Natural killer cell (primary cell): ENCODE measurements at regions of chr16 and their contacts with region 1.

Region 1: DNA sequence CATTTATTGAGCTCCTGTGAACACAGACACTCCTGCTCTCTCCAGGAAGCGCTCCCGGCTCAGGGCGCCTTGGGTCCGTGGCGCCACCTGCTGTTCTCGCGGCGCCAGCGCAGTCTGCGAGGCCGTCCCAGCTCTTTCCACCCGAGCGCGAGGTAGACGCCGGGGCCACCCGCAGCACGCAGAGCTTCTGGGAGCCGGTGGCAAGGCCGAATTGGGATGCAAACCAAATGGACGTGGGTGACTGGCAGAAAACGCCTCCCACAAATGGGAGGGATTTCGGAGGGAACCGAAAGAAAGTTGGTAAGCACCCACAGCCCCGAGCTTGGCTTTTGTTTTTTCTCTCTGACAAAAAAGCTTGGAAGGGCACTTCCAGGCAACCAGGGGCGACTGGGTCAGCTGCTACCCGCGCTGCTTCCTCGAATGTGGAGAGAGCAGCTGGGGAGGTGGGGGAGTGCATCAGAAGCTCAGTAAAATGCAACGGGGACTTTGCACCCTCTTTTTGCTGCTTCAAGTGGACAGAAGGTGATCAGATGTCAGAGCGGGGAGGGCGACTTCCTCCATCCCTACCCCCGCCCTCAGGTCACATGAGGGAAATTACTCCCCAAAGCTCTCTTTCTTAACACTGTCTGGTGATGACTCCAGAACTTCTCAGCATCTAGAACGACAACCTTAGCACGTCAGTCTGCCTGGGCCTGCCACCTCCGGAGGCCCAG is 13.5 kb upstream of the N4BP1 start:
- DNase-seq: peak; percentile 80 to 91
- ATAC-seq: peak; percentile 95 to 97 (median 96)
- H3K4me3 ChIP-seq: peak overlapping the region; percentile 41
- H3K4me3 Mint-ChIP-seq: peak overlapping the region; percentile 83
- H3K27ac ChIP-seq: peak overlapping the region; percentile 28
- H3K27ac Mint-ChIP-seq: peak overlapping the region in 1 of 2 donors; percentile 82
- H3K4me1 ChIP-seq: peaks cover 22% of the 10 kb centered on the region
- H3K4me1 Mint-ChIP-seq: peaks cover 15 to 18% of the 10 kb centered on the region in 2 donors
- H3K27me3 ChIP-seq: no peaks in the 10 kb centered on the region
- H3K27me3 Mint-ChIP-seq: no peaks in the 10 kb centered on the region
- CTCF ChIP-seq: peak; percentile 99

Region 2: GRCh38 chr16:48542020-48542473 is 81.4 kb before region 1 on chr16:
- intact Hi-C with region 1: loop called (anchors 1 kb)
- DNase-seq: peak; percentile 43 to 45
- ATAC-seq: peak; percentile 66 to 85 (median 79)
- H3K4me3 ChIP-seq: no peak overlapping the region
- H3K4me3 Mint-ChIP-seq: no peak overlapping the region
- H3K27ac ChIP-seq: no peak overlapping the region
- H3K27ac Mint-ChIP-seq: peak overlapping the region; percentile 43 to 72
- H3K4me1 ChIP-seq: peaks cover 7% of the 10 kb centered on the region
- H3K4me1 Mint-ChIP-seq: peaks cover 15 to 27% of the 10 kb centered on the region in 2 donors
- H3K27me3 ChIP-seq: no peaks in the 10 kb centered on the region
- H3K27me3 Mint-ChIP-seq: no peaks in the 10 kb centered on the region
- CTCF ChIP-seq: peak; percentile 65

Region 3: GRCh38 chr16:48704710-48705109 is 81.2 kb after region 1 on chr16:
- intact Hi-C with region 1: no loop called
- DNase-seq: no peak
- ATAC-seq: no peak
- H3K4me3 ChIP-seq: no peak overlapping the region
- H3K4me3 Mint-ChIP-seq: no peak overlapping the region
- H3K27ac ChIP-seq: no peak overlapping the region
- H3K27ac Mint-ChIP-seq: no peak overlapping the region
- H3K4me1 ChIP-seq: no peaks in the 10 kb centered on the region
- H3K4me1 Mint-ChIP-seq: no peaks in the 10 kb centered on the region
- H3K27me3 ChIP-seq: no peaks in the 10 kb centered on the region
- H3K27me3 Mint-ChIP-seq: peaks cover 0 to 5% of the 10 kb centered on the region in 2 donors
- CTCF ChIP-seq: no peak